Lower lobe of right lung (tissue), 2 donors: ENCODE measurements at regions of chr9 and their contacts with region 1.

Region 1: GRCh38 chr9:21812946-21813568 is 10.6 kb downstream of the MTAP start:
- DNase-seq: peak; percentile 78
- ATAC-seq: peak; percentile 90 to 92
- H3K4me3 ChIP-seq: no peak overlapping the region
- H3K27ac ChIP-seq: peak overlapping the region; percentile 15
- H3K4me1 ChIP-seq: peaks cover 19% of the 10 kb centered on the region
- H3K27me3 ChIP-seq: no peaks in the 10 kb centered on the region
- CTCF ChIP-seq: peak; percentile 92

Region 2: DNA sequence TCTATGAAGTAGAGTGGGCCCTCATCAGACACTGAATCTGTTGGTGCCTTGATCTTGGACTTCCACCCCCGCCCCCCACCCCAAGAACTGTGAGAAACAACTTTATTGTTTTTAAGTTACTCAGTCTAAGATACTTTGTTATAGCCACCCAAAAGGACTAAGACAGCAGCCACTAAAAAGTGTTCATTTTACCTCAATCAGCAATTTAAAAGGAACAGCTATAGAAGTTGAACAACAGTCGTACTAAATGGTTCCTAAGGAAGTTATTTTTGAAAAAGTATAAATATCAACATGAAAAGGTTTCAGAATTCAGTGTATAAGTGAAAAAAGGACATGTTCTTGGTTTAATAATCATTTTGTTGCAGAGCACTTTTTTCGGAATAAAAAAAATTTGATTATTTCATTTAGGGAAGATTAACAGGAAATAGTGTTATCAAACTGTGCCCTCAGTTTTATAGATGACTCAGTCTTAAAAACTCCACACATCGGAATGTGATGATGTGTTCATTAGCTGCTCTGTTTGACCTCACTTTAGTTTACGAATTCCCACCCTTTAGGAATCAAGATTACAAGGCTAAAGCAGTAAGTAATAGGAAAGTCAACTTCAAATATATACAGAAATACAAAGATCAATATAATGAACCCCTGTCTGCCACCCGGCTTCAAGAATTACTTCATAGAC is 60.6 kb after region 1 on chr9:
- intact Hi-C with region 1: no loop called
- DNase-seq: no peak
- ATAC-seq: no peak
- H3K4me3 ChIP-seq: no peak overlapping the region
- H3K27ac ChIP-seq: no peak overlapping the region
- H3K4me1 ChIP-seq: no peaks in the 10 kb centered on the region
- H3K27me3 ChIP-seq: no peaks in the 10 kb centered on the region
- CTCF ChIP-seq: no peak

Region 3: GRCh38 chr9:22238809-22239684 is 426.0 kb after region 1 on chr9:
- intact Hi-C with region 1: loop called (anchors 10 kb)
- DNase-seq: no peak
- ATAC-seq: peak in 1 of 2 donors; percentile 55
- H3K4me3 ChIP-seq: no peak overlapping the region
- H3K27ac ChIP-seq: no peak overlapping the region
- H3K4me1 ChIP-seq: no peaks in the 10 kb centered on the region
- H3K27me3 ChIP-seq: no peaks in the 10 kb centered on the region
- CTCF ChIP-seq: peak; percentile 58

Region 4: DNA sequence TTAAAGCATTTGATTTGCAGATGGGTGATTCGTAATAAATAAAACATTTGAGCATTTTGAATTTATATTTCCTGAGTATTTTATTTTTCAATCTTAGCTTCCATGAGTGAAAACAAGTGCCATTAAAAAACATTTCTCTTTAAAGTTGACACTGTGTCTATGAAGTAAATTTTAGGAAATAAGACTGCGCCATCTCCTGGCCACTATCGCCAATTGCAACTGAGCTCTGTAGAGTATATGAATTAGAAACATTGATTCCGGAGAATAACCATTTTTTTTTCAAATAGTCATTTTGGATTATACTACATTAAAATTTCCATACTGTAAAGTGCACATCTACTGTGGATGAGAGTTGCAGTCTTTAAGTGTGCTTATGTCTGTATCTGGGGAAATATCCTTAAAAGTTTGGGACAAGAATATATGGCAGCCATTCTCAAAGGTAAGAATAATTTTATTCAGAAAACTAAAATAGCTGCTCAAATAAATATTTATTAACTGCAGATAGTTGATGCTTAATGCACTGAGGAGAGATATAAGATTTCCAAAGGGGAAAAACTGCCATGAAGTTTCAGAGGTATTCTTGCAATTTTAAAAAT is 639.5 kb after region 1 on chr9:
- intact Hi-C with region 1: loop called (anchors 5 kb)
- DNase-seq: peak; percentile 51
- ATAC-seq: peak; percentile 49 to 64
- H3K4me3 ChIP-seq: no peak overlapping the region
- H3K27ac ChIP-seq: no peak overlapping the region
- H3K4me1 ChIP-seq: no peaks in the 10 kb centered on the region
- H3K27me3 ChIP-seq: peaks cover 10% of the 10 kb centered on the region
- CTCF ChIP-seq: peak; percentile 87